Gastrocnemius medialis (tissue), 4 donors: ENCODE measurements at regions of chr9 and their contacts with region 1.

Region 1: GRCh38 chr9:96859461-96860198 is 5.3 kb upstream of the ZNF782 start:
- DNase-seq: no peak
- ATAC-seq: no peak
- H3K4me3 ChIP-seq: no peak overlapping the region
- H3K27ac ChIP-seq: no peak overlapping the region
- H3K4me1 ChIP-seq: peaks cover 0 to 5% of the 10 kb centered on the region in 2 donors
- H3K27me3 ChIP-seq: no peaks in the 10 kb centered on the region
- CTCF ChIP-seq: no peak
- POLR2A ChIP-seq: no peak

Region 2: GRCh38 chr9:96813607-96814006 is 46.0 kb before region 1 on chr9:
- in situ Hi-C with region 1: no loop called
- intact Hi-C with region 1: no loop called
- DNase-seq: no peak
- ATAC-seq: no peak
- H3K4me3 ChIP-seq: no peak overlapping the region
- H3K27ac ChIP-seq: no peak overlapping the region
- H3K4me1 ChIP-seq: no peaks in the 10 kb centered on the region
- H3K27me3 ChIP-seq: no peaks in the 10 kb centered on the region
- CTCF ChIP-seq: no peak
- POLR2A ChIP-seq: no peak

Region 3: DNA sequence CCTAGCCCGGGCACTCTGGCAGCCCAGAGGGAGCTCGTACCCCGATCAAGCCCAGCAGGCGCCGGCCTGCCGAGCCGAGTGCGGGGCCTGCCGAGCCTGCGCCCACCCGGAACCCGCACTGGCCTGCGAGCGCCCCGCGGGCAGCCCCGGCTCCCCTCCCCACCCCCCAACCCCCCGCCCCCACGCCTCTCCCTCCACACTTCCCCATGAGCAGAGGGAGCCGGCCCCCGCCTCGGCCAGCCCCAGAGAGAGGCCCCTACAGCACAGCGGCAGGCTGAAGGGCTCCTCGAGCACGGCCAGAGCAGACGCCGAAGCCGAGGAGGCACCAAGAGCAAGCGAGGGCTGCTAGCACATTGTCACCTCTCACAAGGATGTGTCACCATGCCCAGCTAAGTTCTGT is 411.7 kb after region 1 on chr9:
- in situ Hi-C with region 1: no loop called
- intact Hi-C with region 1: no loop called
- DNase-seq: no peak
- ATAC-seq: no peak
- H3K4me3 ChIP-seq: no peak overlapping the region
- H3K27ac ChIP-seq: no peak overlapping the region
- H3K4me1 ChIP-seq: no peaks in the 10 kb centered on the region
- H3K27me3 ChIP-seq: no peaks in the 10 kb centered on the region
- CTCF ChIP-seq: no peak
- POLR2A ChIP-seq: no peak

Region 4: DNA sequence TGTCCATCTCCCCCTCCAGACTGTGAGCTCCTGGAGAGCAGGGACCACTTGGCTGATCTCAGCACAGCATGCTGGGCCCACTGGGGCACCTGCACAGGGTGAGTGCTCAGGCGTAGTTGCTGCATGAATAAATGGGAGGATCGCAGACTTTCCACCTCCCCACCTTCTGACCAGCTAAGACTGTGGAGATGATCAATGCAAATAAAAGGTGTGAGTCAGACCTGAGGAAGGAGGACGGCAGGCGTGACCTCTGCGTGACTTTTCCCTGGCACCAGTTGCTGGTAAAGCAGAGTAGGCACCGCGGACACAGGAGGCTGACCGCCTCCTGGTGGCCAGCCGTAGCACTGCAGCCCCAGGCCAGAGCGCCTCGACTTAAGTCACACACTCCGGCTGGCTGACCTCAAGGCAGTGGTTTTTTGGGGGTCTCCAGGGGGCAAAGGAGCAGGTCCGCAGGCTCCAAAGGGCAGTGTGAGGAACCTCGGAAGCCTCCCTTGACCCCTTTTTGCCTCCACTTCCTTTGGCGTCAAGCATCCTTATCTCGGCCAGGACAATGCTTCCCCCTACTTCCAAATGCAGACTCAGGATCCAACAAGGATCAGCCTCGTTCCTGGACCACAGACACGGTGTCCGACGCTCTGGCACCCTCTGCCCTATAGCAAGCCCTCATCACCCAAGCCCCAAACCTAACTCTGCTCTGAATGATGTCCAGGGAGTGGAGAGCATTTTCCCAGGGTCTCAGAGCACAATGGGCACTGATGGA is 539.5 kb after region 1 on chr9:
- in situ Hi-C with region 1: loop called (anchors 10 to 25 kb)
- intact Hi-C with region 1: loop called (anchors 5 kb)
- DNase-seq: peak in 1 of 2 donors; percentile 30
- ATAC-seq: no peak
- H3K4me3 ChIP-seq: no peak overlapping the region
- H3K27ac ChIP-seq: no peak overlapping the region
- H3K4me1 ChIP-seq: no peaks in the 10 kb centered on the region
- H3K27me3 ChIP-seq: peaks cover 0 to 5% (median 0%) of the 10 kb centered on the region in 3 donors
- CTCF ChIP-seq: peak; percentile 32 to 75 (median 61)
- POLR2A ChIP-seq: no peak